ENCODE measurements at regions of chr14 and their contacts with region 1.

Region 1: DNA sequence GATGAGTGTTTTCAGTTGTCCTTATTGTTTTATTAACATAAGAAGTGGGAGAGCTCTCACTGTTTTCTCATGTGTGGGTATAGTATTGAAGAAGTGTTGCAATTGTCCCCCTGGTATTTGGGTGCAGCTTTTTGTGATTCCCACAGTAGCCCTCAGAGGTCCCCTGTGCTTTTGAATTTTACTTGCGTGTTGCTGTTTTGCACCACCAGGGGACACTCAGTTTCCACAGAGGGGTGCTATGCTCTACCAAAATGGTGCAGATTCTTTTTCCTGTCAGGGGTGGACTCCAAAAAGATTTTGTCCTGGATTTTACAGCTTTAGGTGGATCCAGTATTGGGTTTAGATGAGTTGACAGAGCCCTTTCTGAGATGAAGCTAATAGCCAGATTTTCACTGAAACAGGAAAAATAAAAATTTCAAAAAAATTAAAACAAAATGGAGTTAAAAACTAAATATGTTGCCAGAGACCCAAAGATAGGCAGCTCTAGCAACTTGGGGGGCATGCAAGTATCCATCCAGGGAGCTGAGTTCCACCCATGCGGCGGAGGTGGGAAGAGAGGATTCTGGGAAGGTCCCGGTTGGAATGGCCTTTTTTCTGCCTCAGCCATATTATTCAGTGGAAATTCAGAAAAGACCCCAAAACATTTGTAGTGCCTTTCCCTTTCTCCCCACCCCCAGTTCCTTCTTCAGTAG is 50.2 kb downstream of the TTLL5 start:
- DNase-seq: peak in 38 of 42 donors; percentile 8 to 84 (median 56)

Region 2: GRCh38 chr14:75794615-75795038 is 83.4 kb after region 1 on chr14:
- intact Hi-C with region 1: loop called (anchors 5 kb)
- DNase-seq: peak in 1 of 42 donors; percentile 29

Region 3: DNA sequence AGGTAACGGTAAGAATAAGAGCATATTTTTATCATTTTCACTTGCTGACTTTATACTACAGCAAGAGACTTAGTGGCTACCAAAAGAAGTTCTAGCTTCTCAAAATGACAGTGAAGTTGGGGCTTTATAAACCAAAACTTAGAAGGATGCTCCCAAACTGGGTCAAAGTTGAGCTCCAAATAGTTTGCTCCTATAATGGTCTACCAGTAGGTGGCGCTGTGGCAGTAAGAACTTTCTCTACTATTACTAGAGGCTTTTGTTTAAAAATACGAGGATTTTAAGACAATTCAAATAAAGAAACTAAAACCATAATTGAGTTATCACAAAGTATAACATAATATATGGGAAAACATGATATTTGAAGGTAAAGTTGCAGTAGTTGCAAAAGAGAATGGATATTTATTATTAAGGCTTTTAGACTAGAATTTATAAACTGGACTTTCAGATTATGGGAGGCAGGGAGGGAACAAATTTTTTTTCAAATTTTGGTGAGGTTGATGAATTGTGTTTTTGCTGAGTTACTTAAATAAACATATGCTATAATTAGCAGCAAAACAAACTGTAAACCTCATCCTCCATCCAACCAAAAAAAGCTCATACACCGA is 195.5 kb after region 1 on chr14:
- intact Hi-C with region 1: loop called (anchors 10 kb)
- DNase-seq: peak in 41 of 42 donors; percentile 8 to 95 (median 80)

Region 4: DNA sequence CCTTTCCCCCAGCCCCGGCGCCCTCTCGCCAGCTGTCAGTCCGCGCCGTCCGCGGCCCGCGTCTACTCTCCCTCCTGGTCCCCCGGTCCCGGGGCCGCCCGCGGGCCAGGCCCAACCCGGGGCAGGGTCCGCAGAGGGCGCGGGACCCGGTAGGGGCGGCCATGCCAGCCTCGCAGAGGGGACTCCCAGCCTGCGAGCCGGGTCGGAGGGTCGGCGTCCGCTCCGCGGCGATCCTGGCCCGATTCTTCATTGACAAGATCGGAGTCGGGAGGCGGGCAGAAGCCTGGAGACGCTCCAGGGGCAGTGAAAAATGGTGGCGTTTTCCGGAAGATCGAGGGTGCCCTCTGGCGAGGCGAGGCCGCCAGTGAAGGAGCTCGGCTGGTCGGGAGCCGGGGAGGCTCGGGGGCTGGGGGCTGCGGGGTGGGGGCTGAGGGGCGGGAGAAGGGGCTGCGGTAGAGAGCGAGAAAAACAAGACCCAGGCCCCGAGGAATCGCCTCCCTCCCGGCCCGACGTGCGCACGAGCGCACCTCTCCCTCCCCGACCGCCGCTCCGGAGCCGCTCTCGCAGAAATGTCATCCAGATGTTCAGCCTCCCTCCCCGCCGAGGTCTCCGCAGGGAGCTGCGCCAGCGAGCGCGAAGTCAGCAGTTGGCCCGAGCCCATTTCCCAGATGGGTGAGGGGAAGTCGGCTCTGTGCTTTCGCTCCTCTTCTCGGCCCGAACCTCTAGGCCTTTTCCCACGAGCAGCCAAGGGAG is 271.2 kb after region 1 on chr14:
- intact Hi-C with region 1: loop called (anchors 2 kb)
- DNase-seq: peak; percentile 71 to 96 (median 90)

Measured in head of caudate nucleus (tissue), 42 donors.